Activated T-helper 1 cell treated with anti-CD3 and anti-CD28 coated beads, Interleukin-12 subunit alpha, Interleukin-12 subunit beta, Interleukin-2, Interleukin-4 antibody, amounts not matched to agents 30 ng/mL and 10 ng/mL and 1 ng/mL, durations not matched to agents 14 hours and 24 hours and 36 hours (primary cell): ENCODE measurements at regions of chr19 and their contacts with region 1.

Region 1: DNA sequence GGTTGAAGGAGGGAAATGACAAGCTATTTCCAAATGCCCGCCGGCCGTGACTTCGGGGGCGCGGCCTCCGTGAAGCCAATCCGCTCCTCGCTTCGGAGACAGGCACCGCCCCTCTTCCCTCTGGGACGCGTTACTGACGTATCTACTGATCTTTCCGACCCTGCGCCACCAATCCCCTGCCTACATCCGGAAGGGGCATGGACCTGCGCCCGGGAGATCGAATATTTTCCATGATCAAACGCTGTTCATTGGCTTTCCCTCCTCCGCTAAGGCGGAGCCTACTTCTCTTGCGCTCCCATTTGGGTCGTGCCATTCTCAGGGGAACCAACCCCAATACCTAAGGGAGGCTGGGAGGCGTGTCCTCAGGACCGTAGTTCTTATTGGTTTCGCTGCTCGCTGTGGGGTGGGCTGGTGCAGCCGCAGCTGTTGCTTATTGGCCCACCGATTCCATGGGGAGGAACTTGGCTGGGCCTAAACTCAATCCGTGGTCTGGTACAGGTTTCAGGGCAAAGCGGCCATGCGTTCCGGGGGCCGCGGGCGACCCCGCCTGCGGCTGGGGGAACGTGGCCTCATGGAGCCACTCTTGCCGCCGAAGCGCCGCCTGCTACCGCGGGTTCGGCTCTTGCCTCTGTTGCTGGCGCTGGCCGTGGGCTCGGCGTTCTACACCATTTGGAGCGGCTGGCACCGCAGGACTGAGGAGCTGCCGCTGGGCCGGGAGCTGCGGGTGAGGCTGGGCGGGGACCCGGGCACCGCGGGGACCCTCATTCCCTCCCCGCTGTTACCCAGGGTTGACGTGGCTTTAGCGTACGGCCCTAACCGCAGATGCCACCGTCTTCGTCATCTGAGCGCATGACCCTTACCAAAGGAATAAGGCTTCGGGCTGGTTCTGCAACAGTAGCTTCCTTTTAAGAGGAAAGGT is at the start of gene QPCTL:
- DNase-seq: peak; percentile 97
- H3K4me3 Mint-ChIP-seq: peak within 1 kb of the TSS; percentile 98
- H3K27ac Mint-ChIP-seq: peak within 1 kb of the TSS; percentile 99
- H3K4me1 Mint-ChIP-seq: peaks cover 5% of the 10 kb centered on the region
- H3K27me3 Mint-ChIP-seq: no peaks in the 10 kb centered on the region
- total RNA-seq, gene QPCTL: 13.7 and 18.0 TPM in 2 replicates

Region 2: GRCh38 chr19:45001087-45001739 is 691.2 kb before region 1 on chr19 and contains the start of gene RELB:
- intact Hi-C with region 1: loop called (anchors 2 kb)
- DNase-seq: peak; percentile 96
- H3K4me3 Mint-ChIP-seq: peak within 1 kb of the TSS; percentile 91
- H3K27ac Mint-ChIP-seq: peak within 1 kb of the TSS; percentile 97
- H3K4me1 Mint-ChIP-seq: peaks cover 11% of the 10 kb centered on the region
- H3K27me3 Mint-ChIP-seq: no peaks in the 10 kb centered on the region
- total RNA-seq, gene RELB: 73.3 and 77.5 TPM in 2 replicates

Region 3: GRCh38 chr19:45506246-45506990 is 186.0 kb before region 1 on chr19:
- intact Hi-C with region 1: loop called (anchors 1 kb)
- DNase-seq: peak; percentile 94
- H3K4me3 Mint-ChIP-seq: peak overlapping the region; percentile 95
- H3K27ac Mint-ChIP-seq: peak overlapping the region; percentile 95
- H3K4me1 Mint-ChIP-seq: peaks cover 20% of the 10 kb centered on the region
- H3K27me3 Mint-ChIP-seq: peaks cover 3% of the 10 kb centered on the region

Region 4: DNA sequence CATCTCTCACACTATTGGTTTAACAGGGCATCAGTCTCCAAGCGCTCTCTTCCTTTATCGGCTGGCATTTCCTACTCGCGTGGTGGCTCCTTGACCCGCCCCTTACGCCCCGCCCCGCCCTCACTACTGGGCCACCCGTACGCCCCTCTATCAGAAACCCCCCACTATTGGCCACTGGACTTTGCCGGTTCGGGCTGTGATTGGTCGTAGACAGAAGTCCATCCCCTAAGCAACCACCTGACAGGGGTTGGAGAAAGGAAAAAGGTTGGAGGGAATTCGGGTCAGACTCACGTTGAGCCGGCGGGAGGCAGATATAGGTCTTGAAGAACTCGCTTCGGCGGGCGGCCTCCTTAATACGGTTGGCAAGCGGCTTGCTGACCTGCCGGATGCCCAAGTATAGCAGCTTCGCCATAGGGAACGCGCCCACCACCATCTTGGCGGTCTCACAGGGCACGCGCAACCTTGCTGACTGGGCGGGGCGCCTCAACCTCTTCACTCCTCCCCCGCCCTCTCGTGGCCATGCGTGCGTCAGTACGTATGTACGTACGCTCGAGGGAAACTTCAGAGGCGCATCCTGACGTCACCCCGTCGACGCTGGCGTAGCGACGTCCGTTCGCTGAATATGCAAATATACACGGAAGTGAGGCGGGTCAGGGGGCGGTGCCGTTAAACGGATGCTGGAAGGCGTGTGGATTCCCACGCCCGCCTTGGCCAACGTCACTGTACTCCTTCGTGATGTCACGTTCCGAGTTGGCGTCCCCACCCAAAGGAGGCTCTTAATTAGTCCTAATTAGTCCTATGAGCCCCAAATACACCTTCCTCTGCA is 107.9 kb before region 1 on chr19 and contains the start of gene OPA3:
- intact Hi-C with region 1: loop called (anchors 1 kb)
- DNase-seq: peak; percentile 98
- H3K4me3 Mint-ChIP-seq: peak within 1 kb of the TSS; percentile 95
- H3K27ac Mint-ChIP-seq: peak within 1 kb of the TSS; percentile 96
- H3K4me1 Mint-ChIP-seq: peaks cover 16% of the 10 kb centered on the region
- H3K27me3 Mint-ChIP-seq: no peaks in the 10 kb centered on the region
- total RNA-seq, gene OPA3: 12.1 and 16.2 TPM in 2 replicates

Region 5: DNA sequence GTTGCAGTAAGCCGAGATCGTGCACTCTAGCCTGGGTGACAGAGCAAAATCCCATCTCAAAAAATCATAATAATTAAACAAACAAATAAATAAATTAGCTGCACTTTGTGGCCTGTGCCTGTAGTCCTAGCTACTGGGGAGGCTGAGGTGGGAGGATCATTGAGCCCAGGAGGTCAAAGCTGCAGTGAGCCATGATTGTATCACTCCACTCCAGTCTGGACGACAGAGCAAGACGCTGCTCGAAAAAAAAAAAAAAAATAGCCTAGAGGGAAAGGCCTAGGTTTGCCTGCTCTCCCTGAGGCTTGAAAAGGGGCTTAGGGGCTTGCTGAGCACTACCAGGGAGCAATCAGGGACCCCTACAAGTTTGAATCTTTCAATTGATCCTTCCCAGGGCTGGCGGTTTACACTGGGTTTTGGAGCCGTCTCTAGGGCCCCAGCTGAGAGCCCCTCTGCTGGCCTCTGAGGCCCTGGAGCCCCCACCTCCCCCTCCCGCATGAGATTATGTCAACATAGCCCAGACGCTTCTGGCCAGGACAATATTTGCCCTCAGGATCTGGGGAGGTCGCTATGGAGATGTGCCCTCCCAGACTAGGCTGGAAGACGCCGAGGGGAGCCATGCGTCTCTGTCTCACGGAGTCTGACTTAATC is 34.8 kb before region 1 on chr19:
- intact Hi-C with region 1: no loop called
- DNase-seq: no peak
- H3K4me3 Mint-ChIP-seq: no peak overlapping the region
- H3K27ac Mint-ChIP-seq: no peak overlapping the region
- H3K4me1 Mint-ChIP-seq: no peaks in the 10 kb centered on the region
- H3K27me3 Mint-ChIP-seq: peaks cover 13% of the 10 kb centered on the region

Region 6: DNA sequence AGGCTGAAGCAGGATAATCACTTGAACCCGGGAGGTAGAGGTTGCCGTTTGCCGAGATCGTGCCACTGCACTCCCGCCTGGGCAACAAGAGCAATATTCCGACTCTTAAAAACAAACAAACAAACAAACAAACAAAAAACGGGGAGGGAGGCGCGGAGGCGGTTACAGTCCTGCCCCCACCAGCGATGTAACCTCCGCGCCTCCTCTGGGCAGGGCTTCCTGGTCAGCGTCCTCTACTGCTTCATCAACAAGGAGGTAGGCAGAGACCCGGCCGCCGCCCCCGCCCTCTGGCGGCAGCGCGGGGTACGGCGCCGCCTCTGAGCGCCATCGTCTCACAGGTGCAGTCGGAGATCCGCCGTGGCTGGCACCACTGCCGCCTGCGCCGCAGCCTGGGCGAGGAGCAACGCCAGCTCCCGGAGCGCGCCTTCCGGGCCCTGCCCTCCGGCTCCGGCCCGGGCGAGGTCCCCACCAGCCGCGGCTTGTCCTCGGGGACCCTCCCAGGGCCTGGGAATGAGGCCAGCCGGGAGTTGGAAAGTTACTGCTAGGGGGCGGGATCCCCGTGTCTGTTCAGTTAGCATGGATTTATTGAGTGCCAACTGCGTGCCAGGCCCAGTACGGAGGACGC is 10.9 kb before region 1 on chr19:
- intact Hi-C with region 1: loop called (anchors 1 kb)
- DNase-seq: peak; percentile 87
- H3K4me3 Mint-ChIP-seq: peak overlapping the region; percentile 80
- H3K27ac Mint-ChIP-seq: peak overlapping the region; percentile 82
- H3K4me1 Mint-ChIP-seq: peaks cover 20% of the 10 kb centered on the region
- H3K27me3 Mint-ChIP-seq: peaks cover 2% of the 10 kb centered on the region

Region 7: GRCh38 chr19:45730389-45731288 is 38.2 kb after region 1 on chr19 and contains the start of gene FBXO46:
- intact Hi-C with region 1: loop called (anchors 1 kb)
- DNase-seq: peak; percentile 95
- H3K4me3 Mint-ChIP-seq: peak within 1 kb of the TSS; percentile 99
- H3K27ac Mint-ChIP-seq: peak within 1 kb of the TSS; percentile 85
- H3K4me1 Mint-ChIP-seq: peaks cover 26% of the 10 kb centered on the region
- H3K27me3 Mint-ChIP-seq: peaks cover 2% of the 10 kb centered on the region
- total RNA-seq, gene FBXO46: 35.1 and 35.4 TPM in 2 replicates

Region 8: DNA sequence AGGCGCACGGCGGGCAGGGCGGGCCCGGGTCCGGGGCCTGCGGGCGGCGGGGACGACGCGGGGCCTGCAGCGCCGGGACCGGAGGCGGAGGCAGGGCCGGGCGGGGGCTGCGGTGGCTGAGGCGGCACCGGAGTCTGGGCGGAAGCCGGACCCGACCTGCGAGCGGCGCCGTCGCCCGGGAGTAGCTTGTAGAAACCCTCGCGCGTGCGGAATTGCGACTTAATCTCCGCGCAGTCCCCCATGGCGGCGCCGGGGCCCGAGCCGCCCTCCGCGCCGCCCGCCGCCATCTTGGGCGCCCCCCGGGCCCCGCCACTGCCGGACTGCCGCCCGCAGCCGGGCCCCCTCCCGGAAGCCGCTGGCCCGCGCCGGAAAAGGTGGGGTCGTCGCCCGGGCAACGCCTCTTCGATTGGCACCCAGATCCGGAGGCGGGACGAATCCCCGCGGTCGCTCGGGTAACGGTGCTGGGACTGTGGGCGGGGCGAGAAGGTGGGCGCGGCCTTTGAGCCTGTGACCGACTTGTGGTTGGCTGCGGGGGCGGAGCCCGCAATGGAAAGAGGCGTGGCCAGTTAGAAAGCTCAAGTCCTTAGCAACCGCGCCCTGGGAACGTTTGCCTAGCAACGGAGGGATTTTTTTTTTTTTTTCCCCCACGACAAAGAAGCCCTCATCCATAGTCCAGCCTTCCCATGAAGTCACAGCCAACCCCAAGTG is 100.2 kb after region 1 on chr19 and contains the start of gene DMWD:
- intact Hi-C with region 1: loop called (anchors 2 kb)
- DNase-seq: peak; percentile 99
- H3K4me3 Mint-ChIP-seq: peak within 1 kb of the TSS; percentile 89
- H3K27ac Mint-ChIP-seq: peak within 1 kb of the TSS; percentile 95
- H3K4me1 Mint-ChIP-seq: peaks cover 30% of the 10 kb centered on the region
- H3K27me3 Mint-ChIP-seq: peaks cover 52% of the 10 kb centered on the region
- total RNA-seq, gene DMWD: 50.0 and 55.8 TPM in 2 replicates